H1 (cell line): ENCODE measurements at regions of chr19 and their contacts with region 1.

Region 1: DNA sequence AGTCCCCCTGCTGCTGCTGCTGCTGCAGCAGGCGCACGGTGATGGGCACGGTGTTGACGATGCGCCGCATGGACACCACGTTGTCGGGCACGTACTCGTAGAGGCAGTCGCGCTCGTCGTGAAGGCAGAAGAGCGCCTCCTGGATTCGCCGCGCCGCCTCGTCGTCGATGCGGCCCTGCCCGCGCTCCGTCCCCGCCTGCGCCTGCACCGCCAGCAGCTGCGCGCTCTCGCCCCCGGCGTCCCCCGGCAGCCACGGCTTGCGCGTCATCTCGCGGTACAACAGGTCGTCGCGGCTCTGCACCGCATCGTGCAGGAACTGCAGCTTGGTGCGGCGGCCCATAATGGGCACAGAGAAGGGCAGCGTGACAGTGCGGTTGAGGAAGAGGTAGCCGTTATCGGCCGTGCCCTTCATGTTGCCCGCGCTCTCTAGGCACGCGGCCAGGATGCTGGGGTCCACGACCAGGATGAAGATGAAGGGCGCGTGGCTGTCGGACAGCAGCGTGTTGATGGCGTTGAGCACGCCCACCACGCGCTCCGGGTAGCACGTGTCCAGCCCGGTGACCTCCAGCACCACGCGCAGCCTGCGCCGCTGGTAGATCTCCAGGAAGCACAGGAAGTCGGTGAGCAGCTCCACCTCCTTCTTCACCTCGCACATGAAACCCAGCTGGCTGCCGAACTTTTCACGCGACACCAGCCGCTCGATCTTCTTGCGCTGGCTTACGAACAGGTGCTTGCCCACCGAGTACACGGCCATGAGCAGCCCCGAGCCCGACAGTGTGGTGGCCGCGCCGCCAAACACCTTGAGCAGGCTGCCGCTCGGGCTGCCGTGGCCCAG is 8.1 kb downstream of the NKPD1 start:
- DNase-seq: peak in 1 of 2 experiments; percentile 75
- H3K4me3 ChIP-seq: peak overlapping the region in 2 of 4 experiments; percentile 7 to 49; a peak in 2 of 8 replicates
- H3K27ac ChIP-seq: no peak overlapping the region
- H3K4me1 ChIP-seq: peaks cover 0 to 13% (median 3%) of the 10 kb centered on the region in 4 experiments; a peak in 6 of 7 replicates
- H3K27me3 ChIP-seq: peaks cover 16 to 45% (median 39%) of the 10 kb centered on the region in 4 experiments
- CTCF ChIP-seq: peak; percentile 33 to 57 (median 41)
- EP300 ChIP-seq: no peak
- POLR2A ChIP-seq: no peak
- RAD21 ChIP-seq: no peak; a peak in 1 of 4 replicates

Region 2: DNA sequence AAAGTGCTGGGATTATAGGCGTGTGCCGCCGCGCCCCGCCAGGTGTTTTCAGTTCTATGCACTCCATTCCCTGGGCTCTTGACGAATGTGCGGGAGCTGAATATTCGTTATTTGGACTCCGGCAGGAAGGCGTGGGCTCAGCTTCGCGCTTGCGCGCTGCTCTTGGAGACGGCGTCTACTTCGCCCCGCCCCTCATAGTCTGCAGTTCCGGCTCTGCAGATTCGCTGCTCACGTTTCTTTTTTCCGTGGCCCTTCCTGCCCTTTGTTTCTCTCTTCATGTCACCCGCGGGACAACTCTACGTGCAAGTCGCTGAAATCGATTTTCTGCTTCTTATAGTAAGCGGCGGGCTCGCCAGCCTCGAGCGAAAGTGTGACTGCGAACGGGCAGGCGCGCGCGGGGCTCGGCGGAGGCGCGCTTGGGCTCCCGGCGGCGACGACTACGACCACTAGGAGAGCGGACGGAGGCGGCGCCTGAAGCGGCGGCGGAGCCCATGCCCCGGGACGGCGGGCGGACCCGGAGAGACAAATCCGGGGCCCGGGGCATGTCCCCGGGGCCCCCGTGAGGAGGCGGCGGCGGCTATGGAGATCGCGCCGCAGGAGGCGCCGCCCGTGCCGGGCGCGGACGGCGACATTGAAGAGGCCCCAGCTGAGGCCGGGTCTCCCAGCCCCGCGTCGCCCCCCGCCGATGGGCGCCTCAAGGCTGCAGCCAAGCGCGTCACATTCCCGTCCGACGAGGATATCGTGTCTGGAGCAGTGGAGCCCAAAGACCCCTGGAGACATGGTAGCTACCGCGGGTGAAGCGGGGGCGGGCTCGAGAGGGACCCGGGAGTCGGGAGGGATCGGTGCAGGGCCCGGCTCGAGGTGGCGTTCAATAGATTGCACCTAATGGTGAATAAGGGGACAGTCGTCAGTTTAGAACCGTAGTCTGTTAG is 59.7 kb before region 1 on chr19 and contains the start of gene PPP1R37:
- CTCF ChIA-PET with region 1: interaction called, 7 read pairs
- POLR2A ChIA-PET with region 1: interaction called, 19 read pairs
- DNase-seq: peak; percentile 89 to 90
- H3K4me3 ChIP-seq: peak within 1 kb of the TSS; percentile 73 to 97 (median 86)
- H3K27ac ChIP-seq: peak within 1 kb of the TSS; percentile 98
- H3K4me1 ChIP-seq: peaks cover 6 to 25% (median 12%) of the 10 kb centered on the region in 4 experiments
- H3K27me3 ChIP-seq: no peaks in the 10 kb centered on the region
- CTCF ChIP-seq: peak in 2 of 3 experiments; percentile 5 to 20; a peak in 2 of 4 replicates
- EP300 ChIP-seq: peak; percentile 3 to 94; a peak in 2 of 3 replicates
- POLR2A ChIP-seq: no peak; a peak in 1 of 3 replicates
- RAD21 ChIP-seq: no peak
- total RNA-seq, gene PPP1R37: 25.7 and 27.0 TPM in 2 replicates

Region 3: GRCh38 chr19:45130888-45131615 is 21.7 kb before region 1 on chr19:
- CTCF ChIA-PET with region 1: interaction called, 22 read pairs
- POLR2A ChIA-PET with region 1: interaction called, 5 read pairs
- DNase-seq: no peak
- H3K4me3 ChIP-seq: no peak overlapping the region
- H3K27ac ChIP-seq: no peak overlapping the region
- H3K4me1 ChIP-seq: peaks cover 0 to 12% (median 6%) of the 10 kb centered on the region in 4 experiments; a peak in 5 of 7 replicates
- H3K27me3 ChIP-seq: no peaks in the 10 kb centered on the region; a peak in 1 of 7 replicates
- CTCF ChIP-seq: no peak
- EP300 ChIP-seq: no peak
- POLR2A ChIP-seq: no peak
- RAD21 ChIP-seq: no peak

Region 4: GRCh38 chr19:45137179-45137761 is 15.5 kb before region 1 on chr19:
- CTCF ChIA-PET with region 1: interaction called, 12 read pairs
- POLR2A ChIA-PET with region 1: interaction called, 5 read pairs
- DNase-seq: no peak
- H3K4me3 ChIP-seq: no peak overlapping the region
- H3K27ac ChIP-seq: no peak overlapping the region
- H3K4me1 ChIP-seq: peaks cover 0 to 18% (median 8%) of the 10 kb centered on the region in 4 experiments; a peak in 5 of 7 replicates
- H3K27me3 ChIP-seq: no peaks in the 10 kb centered on the region
- CTCF ChIP-seq: no peak
- EP300 ChIP-seq: no peak
- POLR2A ChIP-seq: no peak
- RAD21 ChIP-seq: no peak

Region 5: DNA sequence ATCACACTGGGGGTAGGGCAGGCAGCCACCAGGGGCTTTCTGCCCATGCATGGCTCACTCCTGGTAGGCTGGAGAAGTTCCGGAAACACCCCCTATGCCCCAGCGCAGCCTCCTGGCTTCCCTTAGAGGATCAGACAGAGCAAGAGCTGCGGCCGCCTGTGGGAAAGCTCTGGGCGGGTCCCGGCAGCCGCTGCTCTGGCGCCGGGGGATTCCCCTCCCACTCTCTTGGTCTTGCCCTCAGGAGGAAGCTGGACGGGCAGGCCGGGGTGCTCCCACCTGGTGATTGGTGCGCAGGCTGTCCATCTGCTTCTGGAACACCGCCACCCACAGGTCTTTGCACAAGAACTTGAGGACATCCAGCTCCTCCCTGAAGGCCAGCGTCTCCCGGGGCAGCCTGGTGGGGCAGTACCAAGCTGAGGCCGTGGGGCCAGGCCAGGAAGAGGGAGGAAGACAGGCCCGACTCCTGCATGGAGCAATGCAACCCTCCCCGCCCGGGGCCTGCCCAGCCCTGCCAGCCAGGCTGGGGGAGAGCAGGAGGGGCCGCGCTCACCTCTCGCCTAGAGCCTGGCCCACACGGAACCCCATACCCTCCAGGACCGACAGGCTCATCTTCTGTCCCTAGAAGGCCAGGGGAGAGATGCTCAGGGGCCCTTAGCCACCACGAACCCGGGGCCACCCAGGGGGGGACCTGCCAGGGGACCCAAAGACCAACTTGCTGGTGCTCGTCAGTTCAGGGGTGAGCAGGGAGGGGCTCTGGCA is 12.0 kb after region 1 on chr19:
- CTCF ChIA-PET with region 1: interaction called, 32 read pairs
- POLR2A ChIA-PET with region 1: interaction called, 21 read pairs
- DNase-seq: peak; percentile 50 to 69
- H3K4me3 ChIP-seq: no peak overlapping the region
- H3K27ac ChIP-seq: no peak overlapping the region
- H3K4me1 ChIP-seq: peaks cover 0 to 17% (median 8%) of the 10 kb centered on the region in 4 experiments; a peak in 5 of 7 replicates
- H3K27me3 ChIP-seq: peaks cover 0 to 5% (median 1%) of the 10 kb centered on the region in 4 experiments; a peak in 3 of 7 replicates
- CTCF ChIP-seq: peak in 1 of 3 experiments; percentile 2; a peak in 2 of 4 replicates
- EP300 ChIP-seq: no peak
- POLR2A ChIP-seq: no peak
- RAD21 ChIP-seq: no peak

Region 6: DNA sequence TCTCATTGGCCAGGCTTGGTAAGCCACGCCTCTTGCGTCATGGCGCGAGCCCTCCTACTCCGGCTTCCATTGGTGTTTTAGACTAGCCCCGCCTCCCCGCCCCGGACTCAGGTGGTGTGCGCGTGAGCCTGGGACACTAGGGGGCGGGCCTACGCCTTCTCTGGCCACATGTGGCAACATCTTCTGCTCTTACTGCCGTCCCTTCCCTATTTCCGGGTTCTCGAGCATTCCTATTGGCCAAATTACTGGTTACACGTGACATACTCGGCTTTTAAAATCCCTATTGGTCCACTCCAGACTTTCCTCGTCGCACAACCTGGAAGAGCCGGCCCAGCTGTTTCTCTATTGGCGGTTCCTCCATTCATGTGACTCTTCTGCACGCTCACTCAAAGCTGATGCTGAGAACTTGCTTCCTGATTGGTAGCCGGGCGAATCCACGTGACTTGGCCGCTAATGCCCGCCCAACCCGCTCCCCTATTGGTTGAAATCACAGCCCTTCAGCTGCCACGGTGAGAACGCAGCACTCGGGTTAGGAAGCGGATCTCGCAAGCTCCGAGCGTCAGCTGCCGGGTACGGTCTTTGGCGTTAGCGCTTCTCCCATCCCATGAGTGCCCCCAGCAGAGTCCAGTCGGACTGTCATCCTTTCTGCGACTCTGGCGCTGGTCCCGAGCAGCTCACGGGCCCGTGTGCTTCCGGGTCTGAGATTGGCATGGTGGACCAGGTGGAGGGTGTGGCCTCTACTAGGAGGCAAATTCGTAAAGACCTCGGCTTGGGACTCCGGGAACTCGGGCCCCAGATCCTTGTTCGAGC is 25.7 kb after region 1 on chr19 and contains the start of gene BLOC1S3:
- CTCF ChIA-PET with region 1: interaction called, 10 read pairs
- POLR2A ChIA-PET with region 1: interaction called, 4 read pairs
- DNase-seq: peak; percentile 98 to 99
- H3K4me3 ChIP-seq: peak within 1 kb of the TSS; percentile 79 to 97 (median 93)
- H3K27ac ChIP-seq: peak within 1 kb of the TSS; percentile 82
- H3K4me1 ChIP-seq: peaks cover 0 to 5% (median 0%) of the 10 kb centered on the region in 4 experiments; a peak in 5 of 7 replicates
- H3K27me3 ChIP-seq: no peaks in the 10 kb centered on the region
- CTCF ChIP-seq: peak; percentile 19 to 70 (median 63); a peak in 3 of 4 replicates
- EP300 ChIP-seq: no peak
- POLR2A ChIP-seq: no peak
- RAD21 ChIP-seq: no peak
- total RNA-seq, gene BLOC1S3: 6.0 and 8.0 TPM in 2 replicates

Region 7: GRCh38 chr19:45187421-45188100 is 34.8 kb after region 1 on chr19:
- CTCF ChIA-PET with region 1: interaction called, 10 read pairs
- POLR2A ChIA-PET with region 1: interaction called, 4 read pairs
- DNase-seq: peak in 1 of 2 experiments; percentile 61
- H3K4me3 ChIP-seq: no peak overlapping the region
- H3K27ac ChIP-seq: no peak overlapping the region
- H3K4me1 ChIP-seq: peaks cover 0 to 3% (median 2%) of the 10 kb centered on the region in 4 experiments; a peak in 3 of 7 replicates
- H3K27me3 ChIP-seq: no peaks in the 10 kb centered on the region; a peak in 1 of 7 replicates
- CTCF ChIP-seq: peak in 2 of 3 experiments; percentile 71 to 74; a peak in 3 of 4 replicates
- EP300 ChIP-seq: no peak
- POLR2A ChIP-seq: no peak
- RAD21 ChIP-seq: peak; percentile 65 to 75